AG04449 (cell line): ENCODE measurements at regions of chr3 and their contacts with region 1.

Region 1: DNA sequence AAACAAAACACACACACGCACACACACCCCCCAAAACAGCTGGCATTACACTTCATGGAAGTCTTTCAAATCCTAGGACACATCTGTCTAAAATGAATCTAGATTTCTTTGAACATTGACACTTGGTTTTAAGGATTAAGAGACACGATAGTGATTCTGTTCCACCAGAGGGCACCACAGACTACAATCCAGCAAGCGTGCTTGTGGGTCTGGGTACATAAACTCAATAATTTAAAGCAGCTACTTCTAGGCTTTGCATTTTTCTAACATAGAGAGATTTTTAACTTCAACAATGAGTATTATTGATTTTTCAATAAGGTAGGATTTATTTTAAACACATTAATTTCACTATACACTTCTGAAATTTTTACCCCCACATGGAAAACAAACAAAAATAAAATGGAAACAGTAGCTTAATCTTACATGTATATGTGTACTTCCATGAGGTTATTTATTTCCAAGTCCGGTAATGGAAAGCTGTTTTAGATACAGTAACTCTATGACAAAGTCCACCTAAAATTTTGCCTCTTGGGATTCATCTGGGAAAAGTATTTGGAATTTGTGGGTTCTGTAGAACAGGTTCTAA is 564.0 kb upstream of the TGFBR2 start:
- DNase-seq: peak; percentile 19
- H3K4me3 ChIP-seq: no peak overlapping the region
- CTCF ChIP-seq: peak; percentile 44

Region 2: GRCh38 chr3:29731050-29731449 is 311.3 kb before region 1 on chr3:
- CTCF ChIA-PET with region 1: no interaction called
- POLR2A ChIA-PET with region 1: no interaction called
- DNase-seq: no peak
- H3K4me3 ChIP-seq: no peak overlapping the region
- CTCF ChIP-seq: no peak

Region 3: GRCh38 chr3:30188713-30189112 is 146.3 kb after region 1 on chr3:
- CTCF ChIA-PET with region 1: interaction called, 14 read pairs
- POLR2A ChIA-PET with region 1: no interaction called
- DNase-seq: no peak
- H3K4me3 ChIP-seq: no peak overlapping the region
- CTCF ChIP-seq: no peak

Region 4: DNA sequence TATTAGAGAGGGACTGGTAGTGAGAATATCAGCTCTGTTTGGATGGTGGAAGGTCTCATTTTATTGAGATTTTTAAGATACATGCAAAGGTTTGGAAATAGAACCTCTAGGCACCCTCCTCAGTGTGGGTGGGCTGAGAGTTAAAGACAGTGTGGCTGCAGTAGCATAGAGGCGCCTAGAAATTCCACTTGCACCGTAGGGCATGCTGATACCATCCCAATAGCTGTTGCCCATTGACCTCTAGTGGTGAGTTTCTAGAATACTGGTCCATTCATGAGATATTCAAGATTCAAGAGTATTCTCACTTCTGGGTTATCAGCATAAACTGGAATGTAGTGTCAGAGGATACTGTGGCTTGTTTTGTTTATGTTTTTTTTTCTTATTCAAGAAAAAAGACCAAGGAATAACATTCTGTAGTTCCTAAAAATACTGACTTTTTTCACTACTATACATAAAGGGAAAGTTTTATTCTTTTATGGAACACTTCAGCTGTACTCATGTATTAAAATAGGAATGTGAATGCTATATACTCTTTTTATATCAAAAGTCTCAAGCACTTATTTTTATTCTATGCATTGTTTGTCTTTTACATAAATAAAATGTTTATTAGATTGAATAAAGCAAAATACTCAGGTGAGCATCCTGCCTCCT is 651.2 kb after region 1 on chr3:
- CTCF ChIA-PET with region 1: interaction called, 79 read pairs
- POLR2A ChIA-PET with region 1: no interaction called
- DNase-seq: no peak
- H3K4me3 ChIP-seq: no peak overlapping the region
- CTCF ChIP-seq: peak; percentile 72

Region 5: GRCh38 chr3:30742796-30743619 is 700.6 kb after region 1 on chr3:
- CTCF ChIA-PET with region 1: interaction called, 105 read pairs
- POLR2A ChIA-PET with region 1: no interaction called
- DNase-seq: no peak
- H3K4me3 ChIP-seq: no peak overlapping the region
- CTCF ChIP-seq: no peak

Region 6: DNA sequence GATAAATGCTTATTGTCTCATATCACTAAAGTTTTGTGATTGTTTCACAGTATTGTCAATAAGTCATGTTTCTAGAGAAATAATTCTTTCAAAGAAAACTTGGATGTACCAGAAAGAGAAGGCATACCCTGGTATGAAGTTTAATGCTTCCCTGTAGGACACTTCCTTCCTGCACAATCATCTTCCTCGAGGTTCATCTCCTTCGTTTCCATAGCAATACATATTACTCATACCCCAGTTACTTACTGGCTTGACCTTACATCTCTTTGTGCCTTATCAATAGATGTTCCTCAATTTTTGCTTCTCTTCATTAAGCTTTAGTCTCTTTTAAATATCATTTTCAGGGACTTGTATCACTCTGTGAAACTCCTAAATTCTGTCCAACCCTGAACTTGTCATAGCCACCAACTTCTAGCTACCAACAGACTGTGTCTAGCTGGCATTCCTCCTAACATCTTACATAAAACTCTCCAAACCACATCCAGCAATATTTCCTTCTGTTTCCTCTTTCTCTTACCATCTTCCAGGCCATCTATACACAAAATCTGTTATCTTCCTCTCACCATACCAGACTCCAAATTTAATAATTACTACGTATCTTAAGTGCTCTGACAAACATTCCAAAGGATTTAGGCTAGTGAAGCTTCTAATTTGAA is 717.8 kb after region 1 on chr3:
- CTCF ChIA-PET with region 1: interaction called, 105 read pairs
- POLR2A ChIA-PET with region 1: no interaction called
- DNase-seq: no peak
- H3K4me3 ChIP-seq: no peak overlapping the region
- CTCF ChIP-seq: no peak